Thyroid gland (tissue), 4 donors: ENCODE measurements at regions of chr1 and their contacts with region 1.

Region 1: GRCh38 chr1:27671964-27672749 is at the start of gene IFI6:
- DNase-seq: peak; percentile 96 to 97
- H3K4me3 ChIP-seq: peak within 1 kb of the TSS in 2 of 3 donors; percentile 17 to 33
- H3K27ac ChIP-seq: peak within 1 kb of the TSS; percentile 86 to 92 (median 91)
- H3K4me1 ChIP-seq: peaks cover 16 to 31% of the 10 kb centered on the region in 2 donors
- H3K27me3 ChIP-seq: no peaks in the 10 kb centered on the region
- CTCF ChIP-seq: peak in 5 of 6 experiments; percentile 8 to 51 (median 43)
- POLR2A ChIP-seq: peak in 1 of 2 donors; percentile 84
- total RNA-seq, gene IFI6: 120 to 174 (median 150) TPM

Region 2: GRCh38 chr1:27725374-27726173 is 53.4 kb after region 1 on chr1 and contains the start of gene FAM76A:
- intact Hi-C with region 1: loop called (anchors 5 kb)
- DNase-seq: peak; percentile 99
- H3K4me3 ChIP-seq: peak within 1 kb of the TSS; percentile 75 to 95 (median 79)
- H3K27ac ChIP-seq: peak within 1 kb of the TSS; percentile 88 to 95 (median 95)
- H3K4me1 ChIP-seq: peaks cover 11 to 15% of the 10 kb centered on the region in 2 donors
- H3K27me3 ChIP-seq: no peaks in the 10 kb centered on the region
- CTCF ChIP-seq: peak in 3 of 6 experiments; percentile 35 to 55 (median 49)
- POLR2A ChIP-seq: peak; percentile 37 to 92
- total RNA-seq, gene FAM76A: 23.7 to 32.6 (median 30.7) TPM

Region 3: DNA sequence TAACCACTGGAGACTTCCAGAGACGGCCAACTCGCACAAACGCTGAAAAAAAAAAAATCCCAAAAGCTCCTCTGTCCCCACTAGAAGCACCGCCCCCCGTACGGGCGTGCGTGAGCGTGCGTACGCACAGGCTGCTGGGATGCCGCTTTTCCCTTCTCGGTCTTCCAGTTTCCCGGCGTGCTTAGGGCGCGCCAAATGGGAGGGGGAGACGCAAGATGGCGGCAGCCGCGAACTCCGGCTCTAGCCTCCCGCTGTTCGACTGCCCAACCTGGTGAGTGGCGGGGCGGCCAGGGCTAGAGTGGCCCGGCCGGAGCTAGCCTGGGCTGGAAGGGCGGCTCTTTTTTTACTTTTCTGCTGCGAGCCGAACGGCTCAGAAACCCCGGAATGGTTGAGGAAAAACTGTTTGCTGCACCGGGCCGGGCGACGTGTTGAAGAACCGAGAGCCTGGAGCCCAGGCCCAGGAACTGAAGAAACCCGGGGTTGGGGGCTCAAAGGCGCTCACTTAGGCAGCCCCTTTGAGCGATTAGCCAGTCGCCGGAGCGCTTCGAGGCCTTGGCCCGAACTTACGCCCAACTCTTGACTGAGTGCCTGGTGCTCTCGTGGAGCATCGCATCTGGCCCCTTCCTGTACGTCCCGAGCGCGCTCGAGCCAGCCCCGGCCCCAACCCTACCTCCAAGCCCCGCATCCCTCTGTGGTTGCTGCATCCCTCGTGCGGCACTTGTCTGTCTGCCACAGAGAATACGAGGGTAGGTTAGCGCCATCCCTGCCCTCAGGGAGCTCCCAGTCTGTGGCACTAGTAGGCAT is 158.7 kb after region 1 on chr1 and contains the start of gene PPP1R8:
- intact Hi-C with region 1: loop called (anchors 10 kb)
- DNase-seq: peak; percentile 94 to 95
- H3K4me3 ChIP-seq: peak within 1 kb of the TSS; percentile 49 to 99 (median 83)
- H3K27ac ChIP-seq: peak within 1 kb of the TSS; percentile 92 to 97 (median 94)
- H3K4me1 ChIP-seq: peaks cover 5 to 16% of the 10 kb centered on the region in 2 donors
- H3K27me3 ChIP-seq: no peaks in the 10 kb centered on the region
- CTCF ChIP-seq: no peak
- POLR2A ChIP-seq: peak in 1 of 2 donors; percentile 83
- total RNA-seq, gene PPP1R8: 29.2 to 34.8 (median 33.1) TPM